Dorsolateral prefrontal cortex (tissue), 120 donors: ENCODE measurements at regions of chr10 and their contacts with region 1.

Region 1: DNA sequence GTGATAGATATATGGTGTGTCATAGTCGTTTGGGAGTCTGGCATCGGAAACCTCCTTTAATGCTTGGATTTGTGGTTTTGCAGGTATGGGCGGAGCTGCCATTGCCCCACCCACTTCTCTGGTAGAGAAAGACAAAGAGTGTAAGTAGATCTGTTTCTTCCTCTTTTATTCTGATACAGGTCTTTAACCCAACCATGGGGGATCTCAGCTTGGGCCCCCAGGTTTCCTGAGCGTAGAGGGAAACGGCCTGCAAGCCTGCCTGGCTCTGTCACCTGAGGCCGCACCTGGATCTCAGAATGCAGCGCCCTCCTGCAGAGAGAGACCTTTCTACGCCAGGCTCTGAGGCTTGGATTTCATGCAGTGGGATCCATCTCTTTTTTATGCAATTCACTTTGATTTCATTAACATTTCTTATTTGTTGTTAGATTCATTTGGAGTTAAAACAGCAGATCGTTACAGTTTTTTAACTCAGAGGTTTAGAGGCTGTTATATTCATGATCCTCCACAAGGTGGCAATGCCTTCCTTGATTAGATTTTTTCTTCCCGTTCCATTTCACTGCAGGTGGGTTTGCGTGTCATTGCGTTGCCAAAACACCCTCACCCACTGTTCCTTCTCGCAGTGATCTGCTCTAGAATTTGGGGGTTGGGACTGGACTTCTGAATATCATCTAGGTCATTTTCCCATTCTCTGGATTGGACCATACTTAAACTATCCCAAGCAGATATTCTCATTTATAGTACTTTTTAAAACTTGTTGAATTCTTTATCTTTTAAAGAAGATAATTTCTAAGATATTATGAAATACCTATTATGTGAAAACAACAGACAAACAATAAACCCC is 20.0 kb downstream of the RBM17 start:
- DNase-seq: no peak
- H3K4me3 ChIP-seq: no peak overlapping the region
- H3K27ac ChIP-seq: peak overlapping the region in 27 of 59 donors; percentile 1 to 76 (median 36)
- H3K27me3 ChIP-seq: no peaks in the 10 kb centered on the region
- CTCF ChIP-seq: peak; percentile 68 to 92 (median 85)

Region 2: GRCh38 chr10:6033954-6034353 is 74.9 kb before region 1 on chr10:
- intact Hi-C with region 1: no loop called
- DNase-seq: no peak
- H3K4me3 ChIP-seq: no peak overlapping the region
- H3K27ac ChIP-seq: no peak overlapping the region
- H3K27me3 ChIP-seq: no peaks in the 10 kb centered on the region
- CTCF ChIP-seq: no peak

Region 3: DNA sequence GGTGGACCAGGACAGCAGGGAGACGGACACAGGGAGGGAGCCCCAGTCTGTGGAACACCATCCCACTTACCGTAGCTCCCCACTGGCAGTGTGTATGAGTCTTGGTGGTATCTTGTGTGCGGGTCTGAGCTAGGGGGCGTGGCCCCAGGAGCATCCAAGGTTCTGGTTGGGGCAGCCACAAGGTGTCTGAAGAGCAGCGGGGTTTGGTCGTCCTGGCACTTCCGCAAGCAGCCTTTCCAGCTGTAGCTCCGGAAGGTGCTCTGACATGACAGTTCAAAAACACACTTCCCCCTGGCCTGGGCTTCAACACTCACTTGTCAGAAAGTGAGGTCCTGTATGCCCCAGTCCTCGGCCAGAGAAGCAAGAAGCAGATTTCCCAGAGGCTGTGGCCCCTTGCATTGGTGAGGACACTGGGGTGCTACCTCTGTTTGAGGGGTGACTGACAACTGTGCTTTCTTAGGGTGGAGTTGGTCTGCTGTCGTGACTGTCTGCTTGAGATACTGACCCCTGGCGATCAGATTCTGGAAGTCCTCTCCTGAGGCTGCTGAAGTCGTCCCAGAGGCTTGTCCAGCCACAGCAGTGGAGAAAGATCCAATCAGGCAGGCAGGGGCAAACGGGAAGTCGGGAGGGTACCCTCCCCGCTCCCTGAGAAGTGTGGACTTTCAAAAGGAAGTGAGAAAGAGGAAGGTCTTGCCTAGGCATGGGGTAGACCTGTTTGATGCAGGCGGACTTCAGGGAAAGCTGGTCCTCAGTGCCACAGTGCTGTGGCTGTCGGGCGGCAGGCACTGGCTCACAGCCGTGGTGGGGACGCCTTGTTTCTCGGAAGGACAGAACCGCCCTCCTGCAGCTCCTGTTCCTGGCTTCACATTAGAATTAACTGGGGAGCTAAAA is 42.5 kb after region 1 on chr10:
- intact Hi-C with region 1: loop called (anchors 2 to 5 kb)
- DNase-seq: peak in 9 of 10 donors; percentile 22 to 81 (median 73)
- H3K4me3 ChIP-seq: peak overlapping the region in 48 of 59 donors; percentile 3 to 53 (median 32)
- H3K27ac ChIP-seq: peak overlapping the region in 56 of 59 donors; percentile 3 to 82 (median 62)
- H3K27me3 ChIP-seq: no peaks in the 10 kb centered on the region
- CTCF ChIP-seq: peak in 55 of 56 donors; percentile 14 to 83 (median 71)